A549 (cell line): ENCODE measurements at regions of chr17 and their contacts with region 1.

Region 1: GRCh38 chr17:69575346-69575761 is 160.9 kb downstream of the MAP2K6 start:
- DNase-seq: peak in 1 of 2 experiments; percentile 27
- ATAC-seq: no peak; a peak in 1 of 6 replicates
- H3K4me3 ChIP-seq: no peak overlapping the region
- H3K27ac ChIP-seq: peak overlapping the region; percentile 65 to 80
- H3K4me1 ChIP-seq: peaks cover 39% of the 10 kb centered on the region
- CTCF ChIP-seq: no peak
- EP300 ChIP-seq: no peak
- POLR2A ChIP-seq: no peak
- RAD21 ChIP-seq: no peak

Region 2: GRCh38 chr17:69539781-69540319 is 35.5 kb before region 1 on chr17:
- CTCF ChIA-PET with region 1: interaction called, 12 read pairs
- POLR2A ChIA-PET with region 1: no interaction called
- DNase-seq: peak in 1 of 2 experiments; percentile 31
- ATAC-seq: peak; percentile 75 to 85
- H3K4me3 ChIP-seq: no peak overlapping the region
- H3K27ac ChIP-seq: peak overlapping the region; percentile 16 to 56; a peak in 4 of 6 replicates
- H3K4me1 ChIP-seq: peaks cover 14% of the 10 kb centered on the region; the same call in 2 of the 3 replicates
- CTCF ChIP-seq: no peak
- EP300 ChIP-seq: no peak
- POLR2A ChIP-seq: no peak
- RAD21 ChIP-seq: no peak

Region 3: GRCh38 chr17:69743091-69743490 is 167.7 kb after region 1 on chr17:
- CTCF ChIA-PET with region 1: no interaction called
- POLR2A ChIA-PET with region 1: no interaction called
- DNase-seq: no peak
- ATAC-seq: no peak
- H3K4me3 ChIP-seq: no peak overlapping the region
- H3K27ac ChIP-seq: peak overlapping the region in 1 of 2 experiments; percentile 61; a peak in 3 of 6 replicates
- H3K4me1 ChIP-seq: no peaks in the 10 kb centered on the region
- CTCF ChIP-seq: no peak
- EP300 ChIP-seq: no peak
- POLR2A ChIP-seq: no peak
- RAD21 ChIP-seq: no peak

Region 4: GRCh38 chr17:70144260-70144846 is 569.0 kb after region 1 on chr17:
- CTCF ChIA-PET with region 1: interaction called, 19 read pairs
- POLR2A ChIA-PET with region 1: no interaction called
- DNase-seq: peak; percentile 15 to 50
- ATAC-seq: no peak
- H3K4me3 ChIP-seq: no peak overlapping the region
- H3K27ac ChIP-seq: no peak overlapping the region
- H3K4me1 ChIP-seq: no peaks in the 10 kb centered on the region
- CTCF ChIP-seq: peak; percentile 94
- EP300 ChIP-seq: no peak
- POLR2A ChIP-seq: no peak
- RAD21 ChIP-seq: peak; percentile 75 to 90